CD4-positive, alpha-beta T cell (primary cell): ENCODE measurements at regions of chr1 and their contacts with region 1.

Region 1: GRCh38 chr1:182003953-182004586 is 57.4 kb downstream of the ZNF648 start:
- DNase-seq: no peak
- ATAC-seq: no peak
- H3K4me3 ChIP-seq: no peak overlapping the region
- H3K4me3 Mint-ChIP-seq: no peak overlapping the region
- H3K27ac ChIP-seq: no peak overlapping the region
- H3K27ac Mint-ChIP-seq: no peak overlapping the region
- H3K4me1 ChIP-seq: no peaks in the 10 kb centered on the region
- H3K4me1 Mint-ChIP-seq: no peaks in the 10 kb centered on the region
- H3K27me3 ChIP-seq: no peaks in the 10 kb centered on the region
- H3K27me3 Mint-ChIP-seq: peaks cover 39% of the 10 kb centered on the region
- CTCF ChIP-seq: no peak

Region 2: DNA sequence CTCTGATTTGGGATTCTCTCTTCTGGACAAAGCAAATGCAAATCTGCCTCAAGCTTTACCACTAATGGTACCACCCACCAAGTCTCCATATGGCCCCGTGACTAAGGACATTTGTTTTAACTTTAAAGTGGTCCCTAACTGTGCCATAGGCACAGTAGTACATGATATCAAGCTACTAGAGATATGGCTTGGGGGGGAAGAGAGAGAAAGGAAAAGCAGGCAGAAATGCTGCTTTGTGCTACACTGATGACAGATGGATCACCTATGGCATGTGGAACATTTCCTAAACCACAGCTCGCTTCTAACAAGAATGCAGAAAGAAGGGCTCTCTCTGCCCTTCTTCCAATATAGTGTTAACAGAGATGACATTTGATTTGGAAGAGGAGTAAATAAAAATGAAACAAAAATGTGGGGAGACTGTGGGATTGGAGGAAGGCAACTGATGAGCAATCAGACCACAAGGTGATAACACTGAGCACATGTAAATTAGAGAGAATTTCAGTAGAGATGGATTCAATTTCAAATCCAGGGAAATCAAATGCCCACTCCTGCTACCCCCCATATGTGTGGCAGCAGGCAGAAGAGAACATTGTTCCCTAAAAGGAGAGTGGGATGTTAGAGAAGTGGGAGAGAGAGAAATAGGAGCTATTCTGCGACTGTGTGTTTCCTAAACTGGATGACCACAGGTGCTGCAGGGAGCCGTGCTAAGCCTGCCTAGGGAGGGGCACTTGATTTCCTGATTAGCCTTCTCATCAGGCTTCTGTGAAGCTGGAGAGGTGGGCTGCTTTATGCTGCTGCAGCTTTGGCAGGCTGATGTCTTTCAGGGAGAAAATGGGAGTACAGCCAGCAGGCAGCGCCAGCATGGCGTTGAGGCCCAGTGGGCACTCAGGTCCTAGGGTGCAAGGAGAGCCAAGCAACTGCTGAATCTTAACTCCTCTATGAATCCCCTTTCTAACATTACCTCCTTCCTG is 17.8 kb before region 1 on chr1:
- CTCF ChIA-PET with region 1: no interaction called
- POLR2A ChIA-PET with region 1: no interaction called
- intact Hi-C with region 1: no loop called
- DNase-seq: no peak
- ATAC-seq: no peak
- H3K4me3 ChIP-seq: no peak overlapping the region
- H3K4me3 Mint-ChIP-seq: no peak overlapping the region
- H3K27ac ChIP-seq: no peak overlapping the region
- H3K27ac Mint-ChIP-seq: no peak overlapping the region
- H3K4me1 ChIP-seq: no peaks in the 10 kb centered on the region
- H3K4me1 Mint-ChIP-seq: no peaks in the 10 kb centered on the region
- H3K27me3 ChIP-seq: no peaks in the 10 kb centered on the region
- H3K27me3 Mint-ChIP-seq: peaks cover 27% of the 10 kb centered on the region
- CTCF ChIP-seq: no peak

Region 3: DNA sequence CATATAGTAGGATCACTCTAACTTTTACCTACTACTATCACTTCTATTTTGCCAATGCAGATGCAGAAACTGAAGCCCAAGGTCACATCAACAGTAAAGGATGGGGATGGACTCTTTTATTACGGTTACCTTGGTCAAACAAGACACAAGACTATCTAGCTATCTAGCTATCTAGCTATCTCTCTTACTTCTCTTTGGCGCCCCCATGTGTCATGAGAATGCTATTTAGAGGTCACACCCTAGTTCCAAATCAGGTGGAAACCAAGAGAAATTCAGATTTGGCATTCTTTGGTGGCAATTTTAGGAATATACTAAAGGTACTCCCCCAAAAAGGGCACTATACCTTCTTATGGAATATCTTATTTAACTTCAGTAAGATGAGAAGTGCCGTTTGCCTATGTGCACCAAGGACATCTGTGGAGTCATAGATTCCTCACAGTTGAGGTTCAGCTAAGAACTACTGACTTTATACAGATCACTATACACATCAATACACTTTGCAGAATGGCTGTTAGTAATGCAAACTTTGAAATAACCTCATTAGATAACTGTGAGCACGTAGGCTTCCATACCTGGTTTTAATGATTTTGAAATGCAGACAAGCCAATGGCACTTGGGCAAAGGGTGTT is 50.7 kb after region 1 on chr1:
- CTCF ChIA-PET with region 1: no interaction called
- POLR2A ChIA-PET with region 1: no interaction called
- intact Hi-C with region 1: loop called in 1 of 2 experiments (anchors 5 kb)
- DNase-seq: peak; percentile 13 to 73 (median 48)
- ATAC-seq: peak; percentile 37
- H3K4me3 ChIP-seq: no peak overlapping the region
- H3K4me3 Mint-ChIP-seq: no peak overlapping the region
- H3K27ac ChIP-seq: no peak overlapping the region
- H3K27ac Mint-ChIP-seq: no peak overlapping the region
- H3K4me1 ChIP-seq: no peaks in the 10 kb centered on the region
- H3K4me1 Mint-ChIP-seq: no peaks in the 10 kb centered on the region
- H3K27me3 ChIP-seq: peaks cover 10 to 14% of the 10 kb centered on the region in 2 experiments
- H3K27me3 Mint-ChIP-seq: peaks cover 30% of the 10 kb centered on the region
- CTCF ChIP-seq: peak; percentile 73